ENCODE measurements at regions of chr5 and their contacts with region 1.

Region 1: GRCh38 chr5:62779010-62779422 is 200.4 kb downstream of the LRRC70 start:
- DNase-seq: no peak
- H3K4me3 Mint-ChIP-seq: no peak overlapping the region
- H3K27ac Mint-ChIP-seq: no peak overlapping the region
- H3K4me1 Mint-ChIP-seq: no peaks in the 10 kb centered on the region
- H3K27me3 Mint-ChIP-seq: no peaks in the 10 kb centered on the region

Region 2: DNA sequence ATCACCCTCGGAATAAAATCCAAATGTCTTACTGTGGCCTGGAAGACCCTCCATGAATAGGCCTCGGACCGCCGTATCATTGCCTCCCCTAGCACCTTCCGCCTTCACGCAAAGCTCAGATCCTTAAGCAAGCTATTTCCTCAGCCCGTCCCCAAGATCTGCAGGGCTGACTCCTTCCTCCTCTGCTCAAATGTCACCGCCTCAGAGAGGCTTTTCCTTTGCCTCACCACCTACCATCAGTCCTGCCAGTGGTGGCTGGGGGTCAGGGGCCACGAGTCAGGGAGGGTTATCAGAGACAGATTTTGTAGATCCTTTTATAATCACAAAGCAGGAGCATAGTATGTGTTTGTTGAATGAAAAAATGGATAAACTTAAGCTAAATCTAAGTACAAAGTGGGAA is 547.4 kb before region 1 on chr5:
- CTCF ChIA-PET with region 1: no interaction called
- intact Hi-C with region 1: loop called (anchors 5 kb)
- DNase-seq: no peak
- H3K4me3 Mint-ChIP-seq: no peak overlapping the region
- H3K27ac Mint-ChIP-seq: no peak overlapping the region
- H3K4me1 Mint-ChIP-seq: no peaks in the 10 kb centered on the region
- H3K27me3 Mint-ChIP-seq: no peaks in the 10 kb centered on the region

Region 3: DNA sequence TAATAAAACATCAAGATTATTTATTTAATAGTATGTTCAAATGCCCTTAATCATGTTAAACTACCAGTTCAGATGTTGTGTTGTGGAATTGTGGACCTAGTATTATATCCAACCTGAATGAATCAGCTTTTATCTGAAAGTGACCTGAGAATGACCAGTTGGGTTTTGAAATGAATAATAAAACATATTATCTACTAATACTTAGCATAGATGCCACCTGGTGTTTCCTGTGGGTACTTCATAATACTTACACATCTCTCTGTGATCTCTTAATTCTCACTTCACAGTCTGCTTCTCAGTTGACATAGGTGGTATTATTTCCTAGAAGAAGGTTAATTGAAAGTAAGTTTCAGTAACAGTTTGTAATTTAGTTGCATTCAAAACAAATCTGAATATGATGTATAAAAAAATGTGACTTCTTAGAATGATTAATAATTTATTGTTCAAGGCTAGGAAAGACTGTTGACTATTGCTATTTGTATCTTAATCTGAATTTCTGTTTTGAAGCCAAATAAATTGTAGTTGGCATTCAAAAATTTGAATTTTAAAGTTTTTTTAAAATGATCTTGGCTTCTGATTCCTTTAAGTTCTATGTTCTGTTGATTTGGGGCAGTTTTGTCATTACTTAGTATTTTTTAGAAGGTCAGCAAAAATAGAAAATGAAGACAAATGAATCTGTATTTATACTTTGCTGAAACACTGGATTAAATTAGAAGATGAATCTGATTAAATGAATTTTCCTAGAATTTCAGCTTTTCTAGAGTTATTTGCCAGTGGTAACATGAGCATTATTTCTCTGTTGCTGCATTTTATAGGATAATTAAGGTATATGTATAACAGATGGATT is 424.8 kb before region 1 on chr5:
- CTCF ChIA-PET with region 1: no interaction called
- intact Hi-C with region 1: loop called (anchors 10 kb)
- DNase-seq: no peak
- H3K4me3 Mint-ChIP-seq: no peak overlapping the region
- H3K27ac Mint-ChIP-seq: no peak overlapping the region
- H3K4me1 Mint-ChIP-seq: no peaks in the 10 kb centered on the region
- H3K27me3 Mint-ChIP-seq: no peaks in the 10 kb centered on the region

Region 4: GRCh38 chr5:62448528-62448927 is 330.5 kb before region 1 on chr5:
- CTCF ChIA-PET with region 1: no interaction called
- intact Hi-C with region 1: loop called (anchors 1 kb)
- DNase-seq: no peak
- H3K4me3 Mint-ChIP-seq: no peak overlapping the region
- H3K27ac Mint-ChIP-seq: no peak overlapping the region
- H3K4me1 Mint-ChIP-seq: no peaks in the 10 kb centered on the region
- H3K27me3 Mint-ChIP-seq: no peaks in the 10 kb centered on the region